WTC11 (cell line): ENCODE measurements at regions of chr11 and their contacts with region 1.

Region 1: DNA sequence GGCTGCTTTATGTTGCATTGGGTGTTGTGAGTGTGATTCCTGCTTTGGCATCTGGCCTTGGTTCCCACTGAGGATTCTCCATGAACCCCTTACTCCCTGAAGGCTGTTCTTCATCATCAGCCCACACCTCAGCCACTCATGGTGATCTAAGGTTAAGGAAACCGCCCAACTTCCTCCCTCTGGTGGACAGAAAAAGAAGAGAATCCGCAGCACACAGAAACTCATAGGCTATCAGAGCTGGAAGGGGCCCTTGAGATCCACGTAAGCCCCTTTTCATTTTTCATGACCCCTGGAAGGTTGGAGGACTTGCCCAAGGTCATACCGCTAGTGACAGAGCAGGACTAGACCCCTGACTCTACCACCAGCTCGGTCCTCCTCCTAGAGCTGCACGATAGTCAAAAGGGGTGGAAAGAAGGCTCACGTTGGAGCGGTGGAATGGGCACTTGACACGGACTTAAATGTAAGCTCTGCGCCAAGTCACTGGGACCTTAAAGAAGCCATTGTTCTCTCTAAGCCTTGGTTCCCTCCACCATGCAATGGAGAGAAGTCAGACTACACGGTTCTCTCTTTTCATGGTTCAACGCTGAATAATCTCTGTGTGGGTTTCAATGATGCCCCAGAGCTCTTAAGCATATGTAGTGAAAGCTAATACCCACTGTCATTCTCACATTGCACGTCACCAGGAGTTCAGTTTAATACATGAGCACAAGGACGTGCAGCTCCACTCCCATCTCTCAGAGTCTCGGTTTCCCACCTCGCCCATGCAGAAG is 83.6 kb upstream of the CRTAM start:
- DNase-seq: peak; percentile 30
- ATAC-seq: peak; percentile 85
- H3K4me3 Mint-ChIP-seq: no peak overlapping the region
- H3K27ac Mint-ChIP-seq: no peak overlapping the region
- H3K4me1 Mint-ChIP-seq: 0 out of 2 replicates have a peak, but pooled peaks cover 6% of the 10 kb centered on the region
- H3K27me3 Mint-ChIP-seq: no peaks in the 10 kb centered on the region
- CTCF ChIP-seq: peak; percentile 38; the same call in 1 of the 2 replicates

Region 2: GRCh38 chr11:122578168-122578825 is 176.4 kb before region 1 on chr11:
- CTCF ChIA-PET with region 1: interaction called, 14 read pairs
- POLR2A ChIA-PET with region 1: no interaction called
- DNase-seq: no peak
- ATAC-seq: 0 out of 2 replicates have a peak, but pooled peaks have one; percentile 20
- H3K4me3 Mint-ChIP-seq: no peak overlapping the region
- H3K27ac Mint-ChIP-seq: no peak overlapping the region
- H3K4me1 Mint-ChIP-seq: peaks cover 10% of the 10 kb centered on the region
- H3K27me3 Mint-ChIP-seq: peaks cover 2% of the 10 kb centered on the region; the same call in 1 of the 2 replicates
- CTCF ChIP-seq: no peak

Region 3: DNA sequence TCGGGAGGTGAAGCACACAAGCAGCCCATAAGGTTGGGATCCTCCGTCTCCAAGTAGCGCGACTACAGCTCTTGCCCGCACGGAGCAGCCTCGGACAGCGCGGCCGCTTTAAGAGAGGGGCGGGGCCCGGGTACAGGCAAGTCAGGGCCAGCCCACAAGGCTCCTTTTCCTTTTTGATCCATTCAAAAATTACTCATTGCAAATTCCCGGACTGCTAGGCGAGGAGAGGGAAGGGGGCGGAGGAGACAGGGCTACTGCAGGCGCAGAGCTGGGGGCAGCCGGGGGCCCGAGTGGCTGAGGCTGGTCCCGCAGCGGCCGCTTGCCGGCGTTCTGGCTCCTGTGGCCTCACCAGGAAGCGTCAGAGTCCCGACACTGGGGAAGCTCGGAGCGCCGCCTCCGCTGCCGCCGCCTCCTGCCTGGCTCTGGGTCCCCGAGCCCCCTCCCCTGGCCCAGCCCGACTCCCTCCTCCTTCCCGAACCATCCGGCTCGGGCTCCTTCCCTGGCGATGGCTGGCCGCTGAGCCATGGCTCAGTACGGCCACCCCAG is 99.1 kb before region 1 on chr11 and contains the start of gene UBASH3B:
- CTCF ChIA-PET with region 1: interaction called, 56 read pairs
- POLR2A ChIA-PET with region 1: interaction called, 3 read pairs
- DNase-seq: peak; percentile 82
- ATAC-seq: peak; percentile 88
- H3K4me3 Mint-ChIP-seq: peak within 1 kb of the TSS; percentile 93
- H3K27ac Mint-ChIP-seq: 0 out of 2 replicates have a peak within 1 kb of the TSS, but pooled peaks have one; percentile 41
- H3K4me1 Mint-ChIP-seq: peaks cover 21% of the 10 kb centered on the region
- H3K27me3 Mint-ChIP-seq: peaks cover 22% of the 10 kb centered on the region
- CTCF ChIP-seq: no peak
- total RNA-seq, gene UBASH3B: 18.9 to 22.6 TPM (median 21.1 TPM) in 3 replicates

Region 4: DNA sequence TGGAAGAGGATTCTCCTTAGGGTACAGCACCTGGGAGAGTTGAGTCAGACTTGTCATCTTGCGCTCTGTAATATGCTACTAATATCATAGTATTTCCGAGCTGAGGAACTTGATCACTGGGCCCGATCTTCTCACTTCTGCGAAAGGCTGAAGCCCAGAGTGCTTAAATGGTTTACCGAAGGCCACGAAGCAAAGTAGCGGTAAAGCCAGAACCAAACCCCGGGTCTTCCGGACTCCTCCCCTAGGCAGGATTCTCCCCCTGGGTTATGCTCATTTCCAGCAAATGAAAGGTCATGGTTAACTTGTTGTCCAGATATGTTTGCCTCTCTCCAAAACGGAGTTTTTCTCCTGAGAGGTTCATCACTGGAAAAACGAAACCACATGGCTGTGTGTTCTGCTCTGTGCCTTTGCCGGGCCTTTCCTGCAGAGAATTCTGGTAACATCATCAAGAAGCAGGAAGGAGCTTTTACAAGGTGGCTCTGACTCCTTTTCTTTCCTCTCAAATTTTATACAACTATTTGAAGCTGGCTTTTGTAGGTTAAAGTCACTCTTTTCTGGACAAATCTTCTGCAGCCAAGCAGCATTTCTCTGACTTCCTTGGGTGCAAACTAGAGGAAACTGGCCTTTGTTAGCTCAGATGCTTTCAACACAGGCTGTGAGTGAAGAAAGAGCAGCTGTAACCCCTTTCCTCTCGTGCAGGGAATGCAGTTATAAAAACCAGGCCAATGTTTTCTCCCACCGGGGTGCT is 63.8 kb before region 1 on chr11:
- CTCF ChIA-PET with region 1: interaction called, 12 read pairs
- POLR2A ChIA-PET with region 1: no interaction called
- DNase-seq: no peak
- ATAC-seq: peak; percentile 41; the same call in 1 of the 2 replicates
- H3K4me3 Mint-ChIP-seq: no peak overlapping the region
- H3K27ac Mint-ChIP-seq: peak overlapping the region; percentile 58
- H3K4me1 Mint-ChIP-seq: peaks cover 23% of the 10 kb centered on the region
- H3K27me3 Mint-ChIP-seq: no peaks in the 10 kb centered on the region
- CTCF ChIP-seq: no peak

Region 5: GRCh38 chr11:122733318-122733717 is 21.4 kb before region 1 on chr11:
- CTCF ChIA-PET with region 1: no interaction called
- POLR2A ChIA-PET with region 1: no interaction called
- DNase-seq: no peak
- ATAC-seq: no peak
- H3K4me3 Mint-ChIP-seq: no peak overlapping the region
- H3K27ac Mint-ChIP-seq: no peak overlapping the region
- H3K4me1 Mint-ChIP-seq: peaks cover 9% of the 10 kb centered on the region
- H3K27me3 Mint-ChIP-seq: no peaks in the 10 kb centered on the region
- CTCF ChIP-seq: no peak

Region 6: DNA sequence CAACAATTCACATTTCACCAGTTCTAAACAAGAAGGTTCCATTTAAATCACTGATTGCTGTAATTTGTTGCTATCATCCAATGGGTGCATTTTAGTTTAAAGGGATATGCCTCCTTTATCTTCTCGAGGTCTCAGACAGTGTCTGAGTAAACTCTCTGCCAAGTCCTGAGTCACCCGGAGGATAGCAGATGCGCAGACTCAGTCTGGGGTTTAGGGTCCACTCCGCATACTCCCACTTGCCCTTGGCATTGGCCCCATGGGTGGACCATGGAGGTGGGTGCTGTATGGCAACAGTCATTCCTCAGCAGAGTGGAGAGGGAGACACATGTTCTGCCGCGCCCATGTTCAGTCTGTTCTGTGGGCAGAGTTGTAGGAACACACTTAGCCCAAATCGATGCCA is 18.2 kb after region 1 on chr11:
- CTCF ChIA-PET with region 1: interaction called, 11 read pairs
- POLR2A ChIA-PET with region 1: no interaction called
- DNase-seq: no peak
- ATAC-seq: no peak
- H3K4me3 Mint-ChIP-seq: no peak overlapping the region
- H3K27ac Mint-ChIP-seq: no peak overlapping the region
- H3K4me1 Mint-ChIP-seq: peaks cover 12% of the 10 kb centered on the region
- H3K27me3 Mint-ChIP-seq: no peaks in the 10 kb centered on the region; the same call in 1 of the 2 replicates
- CTCF ChIP-seq: no peak

Region 7: GRCh38 chr11:122853971-122854446 is 99.3 kb after region 1 on chr11:
- CTCF ChIA-PET with region 1: interaction called, 16 read pairs
- POLR2A ChIA-PET with region 1: no interaction called
- DNase-seq: peak; percentile 39
- ATAC-seq: peak; percentile 86
- H3K4me3 Mint-ChIP-seq: no peak overlapping the region
- H3K27ac Mint-ChIP-seq: no peak overlapping the region
- H3K4me1 Mint-ChIP-seq: peaks cover 34% of the 10 kb centered on the region
- H3K27me3 Mint-ChIP-seq: no peaks in the 10 kb centered on the region
- CTCF ChIP-seq: peak; percentile 59; the same call in 1 of the 2 replicates